Activated CD4-positive, alpha-beta T cell treated with anti-CD3 and anti-CD28 coated beads for 36 hours (primary cell): ENCODE measurements at regions of chr2 and their contacts with region 1.

Region 1: DNA sequence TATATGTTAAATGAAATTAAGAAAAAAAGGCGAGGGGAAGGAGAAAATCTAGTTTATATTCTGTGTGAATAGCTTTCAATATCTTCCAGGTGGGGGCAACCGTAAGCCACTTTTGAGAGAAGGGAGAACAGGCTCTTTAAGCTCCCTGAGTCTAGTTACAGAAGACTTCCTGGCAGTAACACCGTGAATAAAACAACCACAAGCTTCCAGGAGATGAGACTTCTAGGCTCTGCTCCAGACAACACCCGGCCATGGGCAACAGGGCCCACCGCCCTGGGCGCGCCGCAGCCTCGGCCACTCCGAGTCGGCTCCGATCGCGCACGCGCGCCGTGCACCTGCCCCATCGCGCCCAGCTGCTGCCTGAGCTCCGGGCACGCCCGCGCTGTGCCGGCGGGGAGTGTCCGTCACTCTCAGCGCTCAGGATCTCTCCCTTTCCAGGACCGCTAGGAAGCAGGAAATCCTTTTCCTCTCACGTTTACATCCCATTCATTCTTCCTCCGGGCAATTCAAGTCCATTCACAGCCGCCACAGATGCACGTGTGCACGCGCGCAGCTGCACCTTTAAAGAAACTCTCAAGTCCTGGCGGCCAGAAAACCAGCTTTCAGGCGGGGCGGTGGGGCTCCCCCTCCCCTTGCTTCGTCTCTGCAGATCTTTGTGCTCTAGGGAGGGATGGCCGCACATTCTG is 19.4 kb upstream of the PAX3 start:
- DNase-seq: peak; percentile 71
- ATAC-seq: peak; percentile 74
- H3K4me3 Mint-ChIP-seq: peak overlapping the region; percentile 77
- H3K27ac Mint-ChIP-seq: no peak overlapping the region
- H3K4me1 Mint-ChIP-seq: peaks cover 11% of the 10 kb centered on the region
- H3K27me3 Mint-ChIP-seq: peaks cover 58% of the 10 kb centered on the region

Region 2: DNA sequence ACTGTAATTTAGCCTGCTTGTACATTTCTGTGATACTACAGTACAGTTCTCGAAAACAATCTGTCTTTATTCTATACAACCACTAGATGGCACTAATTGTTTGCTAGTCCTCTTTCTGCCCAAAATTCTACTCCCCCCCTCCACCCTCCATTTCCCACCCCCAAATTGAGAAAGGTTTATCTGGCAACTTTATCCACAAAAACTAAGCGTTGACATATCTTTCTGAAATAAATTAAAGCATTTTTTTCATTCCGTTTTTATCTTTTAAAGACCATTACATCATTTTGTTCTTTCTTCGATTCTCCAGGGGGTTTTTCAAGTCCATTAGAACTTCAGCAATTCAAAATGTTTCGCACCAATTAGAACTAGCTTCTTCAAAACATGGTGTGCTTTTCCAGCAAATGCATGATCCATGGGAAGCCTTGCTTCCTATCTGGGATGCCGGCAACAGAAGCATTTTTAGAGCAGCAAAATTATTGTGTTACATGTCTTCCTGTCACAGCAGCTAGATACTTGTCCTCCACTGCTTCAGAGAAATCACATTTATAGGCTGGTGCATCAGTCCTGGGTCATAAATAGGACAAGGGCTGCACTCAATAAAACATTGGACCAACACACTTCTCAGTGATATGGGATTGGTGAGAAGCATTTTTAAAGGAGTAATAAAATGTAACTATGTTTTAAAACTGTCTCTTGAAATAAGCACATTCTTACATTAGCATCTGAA is 260.7 kb before region 1 on chr2:
- CTCF ChIA-PET with region 1: no interaction called
- POLR2A ChIA-PET with region 1: no interaction called
- intact Hi-C with region 1: loop called (anchors 5 to 10 kb)
- DNase-seq: no peak
- ATAC-seq: no peak
- H3K4me3 Mint-ChIP-seq: no peak overlapping the region
- H3K27ac Mint-ChIP-seq: no peak overlapping the region
- H3K4me1 Mint-ChIP-seq: no peaks in the 10 kb centered on the region
- H3K27me3 Mint-ChIP-seq: peaks cover 35% of the 10 kb centered on the region

Region 3: GRCh38 chr2:222305516-222306392 is 12.4 kb before region 1 on chr2:
- CTCF ChIA-PET with region 1: interaction called, 15 read pairs
- POLR2A ChIA-PET with region 1: interaction called, 4 read pairs
- intact Hi-C with region 1: loop called in 1 of 2 experiments (anchors 1 kb)
- DNase-seq: no peak
- ATAC-seq: no peak
- H3K4me3 Mint-ChIP-seq: peak overlapping the region; percentile 62
- H3K27ac Mint-ChIP-seq: no peak overlapping the region
- H3K4me1 Mint-ChIP-seq: peaks cover 25% of the 10 kb centered on the region
- H3K27me3 Mint-ChIP-seq: peaks cover 90% of the 10 kb centered on the region

Region 4: DNA sequence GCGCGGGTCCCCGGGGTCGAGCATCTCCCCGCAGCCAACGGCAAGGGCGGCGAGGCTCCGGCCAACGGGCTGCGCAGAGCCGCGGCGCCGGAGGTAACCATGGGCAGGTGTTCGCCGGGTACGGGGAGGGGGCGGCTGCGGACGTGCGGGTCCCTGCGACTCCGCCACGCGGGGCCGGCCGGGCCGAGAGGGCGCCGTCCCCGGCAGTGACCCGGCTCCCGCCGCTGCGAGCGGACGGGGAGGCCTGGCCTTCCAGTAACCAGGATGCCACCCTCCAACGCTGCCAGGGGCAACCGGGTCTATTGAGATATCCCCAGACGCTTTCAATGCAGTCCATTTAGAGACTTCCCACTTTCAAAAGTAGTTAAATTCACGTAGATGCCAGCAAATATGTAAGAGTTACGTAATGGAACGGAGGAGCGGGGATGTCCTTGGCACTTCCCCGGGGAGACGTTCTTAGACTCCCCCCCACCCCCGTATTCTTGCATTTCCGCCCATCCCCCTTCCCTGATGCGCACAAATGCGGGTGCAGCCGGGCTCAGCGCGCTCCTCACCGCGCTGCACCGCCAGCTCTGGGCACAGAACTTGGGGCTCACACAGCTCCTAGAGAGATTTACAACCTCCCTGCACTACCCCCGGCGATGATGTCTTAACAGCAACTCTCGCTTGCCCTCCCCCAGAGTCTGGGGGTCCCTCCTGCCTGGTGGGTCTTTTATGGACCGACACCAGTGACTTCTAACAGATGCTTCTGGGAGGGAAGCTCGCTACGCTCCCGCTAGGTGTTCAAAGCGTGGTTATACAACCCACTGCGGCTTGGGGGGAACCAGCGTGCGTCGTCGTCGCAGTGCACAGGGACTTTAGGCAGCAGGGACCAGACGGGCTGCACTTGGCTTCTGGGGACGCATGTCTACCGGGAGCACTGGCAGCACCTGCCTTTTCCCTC is 106.8 kb after region 1 on chr2:
- CTCF ChIA-PET with region 1: interaction called, 3 read pairs
- POLR2A ChIA-PET with region 1: no interaction called
- intact Hi-C with region 1: loop called (anchors 2 kb)
- DNase-seq: peak; percentile 62
- ATAC-seq: peak; percentile 27
- H3K4me3 Mint-ChIP-seq: peak overlapping the region; percentile 85
- H3K27ac Mint-ChIP-seq: peak overlapping the region; percentile 90
- H3K4me1 Mint-ChIP-seq: peaks cover 50% of the 10 kb centered on the region
- H3K27me3 Mint-ChIP-seq: peaks cover 42% of the 10 kb centered on the region

Region 5: GRCh38 chr2:222483513-222484039 is 165.4 kb after region 1 on chr2:
- CTCF ChIA-PET with region 1: interaction called, 4 read pairs
- POLR2A ChIA-PET with region 1: no interaction called
- intact Hi-C with region 1: loop called in 1 of 2 experiments (anchors 2 kb)
- DNase-seq: peak; percentile 18
- ATAC-seq: no peak
- H3K4me3 Mint-ChIP-seq: no peak overlapping the region
- H3K27ac Mint-ChIP-seq: no peak overlapping the region
- H3K4me1 Mint-ChIP-seq: no peaks in the 10 kb centered on the region
- H3K27me3 Mint-ChIP-seq: peaks cover 7% of the 10 kb centered on the region

Region 6: GRCh38 chr2:222504719-222505118 is 186.6 kb after region 1 on chr2:
- CTCF ChIA-PET with region 1: no interaction called
- POLR2A ChIA-PET with region 1: no interaction called
- intact Hi-C with region 1: no loop called
- DNase-seq: no peak
- ATAC-seq: no peak
- H3K4me3 Mint-ChIP-seq: no peak overlapping the region
- H3K27ac Mint-ChIP-seq: no peak overlapping the region
- H3K4me1 Mint-ChIP-seq: no peaks in the 10 kb centered on the region
- H3K27me3 Mint-ChIP-seq: peaks cover 2% of the 10 kb centered on the region

Region 7: DNA sequence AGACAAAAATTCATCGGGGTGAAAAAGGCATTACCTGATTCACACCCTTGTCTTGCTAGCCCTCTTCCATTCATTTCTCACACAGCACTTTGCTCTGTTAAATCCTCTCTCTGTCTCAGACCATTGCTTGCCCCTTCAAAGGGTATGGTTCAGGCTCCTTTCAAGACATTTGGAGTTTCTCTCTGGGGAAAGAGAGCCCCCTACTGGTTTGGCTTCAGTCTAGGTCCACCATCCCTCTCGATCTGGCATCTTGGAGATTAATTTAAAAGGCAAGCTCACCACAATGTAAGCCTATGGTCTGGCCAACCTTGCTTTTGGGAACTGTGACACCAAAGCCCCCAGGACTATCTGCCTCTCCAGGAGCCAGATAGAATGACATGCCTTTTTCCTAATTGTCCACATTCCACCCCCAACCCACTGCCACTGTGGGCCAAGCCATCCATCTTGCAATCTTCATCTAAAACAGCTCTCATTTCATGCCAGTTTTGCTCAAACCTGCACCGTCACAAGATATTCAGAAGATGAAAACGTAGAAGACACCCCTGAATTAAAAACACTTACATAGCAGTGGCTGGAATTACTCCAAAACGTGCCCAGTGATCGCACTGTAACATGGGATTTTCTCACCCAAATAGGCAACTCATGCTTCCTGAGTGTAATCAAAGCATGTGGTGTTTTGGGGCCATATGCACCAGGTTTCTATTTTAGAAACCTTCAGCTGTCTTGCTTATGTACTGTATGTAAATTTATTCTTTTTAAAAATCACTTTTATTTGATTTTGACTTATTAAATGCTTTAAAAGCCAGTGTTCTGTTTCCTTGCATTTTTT is 243.9 kb after region 1 on chr2:
- CTCF ChIA-PET with region 1: interaction called, 34 read pairs
- POLR2A ChIA-PET with region 1: no interaction called
- intact Hi-C with region 1: loop called (anchors 1 kb)
- DNase-seq: peak; percentile 50
- ATAC-seq: peak; percentile 84
- H3K4me3 Mint-ChIP-seq: no peak overlapping the region
- H3K27ac Mint-ChIP-seq: no peak overlapping the region
- H3K4me1 Mint-ChIP-seq: peaks cover under 1% of the 10 kb centered on the region
- H3K27me3 Mint-ChIP-seq: peaks cover 1% of the 10 kb centered on the region

Region 8: GRCh38 chr2:222613715-222614331 is 295.7 kb after region 1 on chr2:
- CTCF ChIA-PET with region 1: interaction called, 11 read pairs
- POLR2A ChIA-PET with region 1: no interaction called
- intact Hi-C with region 1: loop called (anchors 1 to 2 kb)
- DNase-seq: peak; percentile 15
- ATAC-seq: peak; percentile 55
- H3K4me3 Mint-ChIP-seq: no peak overlapping the region
- H3K27ac Mint-ChIP-seq: no peak overlapping the region
- H3K4me1 Mint-ChIP-seq: peaks cover 5% of the 10 kb centered on the region
- H3K27me3 Mint-ChIP-seq: no peaks in the 10 kb centered on the region